ENCODE measurements at regions of chrX and their contacts with region 1.

Region 1: DNA sequence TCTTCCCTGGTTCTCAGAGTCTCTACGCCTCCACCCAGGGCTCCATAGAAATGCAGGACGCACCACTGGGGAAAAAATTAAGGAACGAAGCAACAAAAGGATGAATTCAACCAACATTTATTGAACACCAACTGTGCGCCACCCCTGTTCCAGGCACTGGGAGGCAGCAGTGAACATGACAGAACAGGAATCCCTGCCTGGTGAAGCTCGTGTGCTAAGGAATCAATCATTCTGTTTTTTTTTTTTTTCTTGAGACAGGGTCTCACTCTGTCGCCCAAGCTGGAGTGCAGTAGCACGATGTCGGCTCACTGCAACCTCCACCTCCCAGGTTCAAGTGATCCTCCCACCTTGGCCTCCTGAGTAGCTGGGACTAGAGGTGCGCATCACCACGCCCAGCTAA is 1.9 kb upstream of the FTSJ1 start:
- DNase-seq: peak in 1 of 2 experiments; percentile 22
- H3K4me3 ChIP-seq: no peak overlapping the region
- H3K4me3 Mint-ChIP-seq: no peak overlapping the region
- H3K27ac Mint-ChIP-seq: no peak overlapping the region
- H3K4me1 ChIP-seq: peaks cover 7% of the 10 kb centered on the region
- H3K4me1 Mint-ChIP-seq: peaks cover 34% of the 10 kb centered on the region
- H3K27me3 ChIP-seq: no peaks in the 10 kb centered on the region
- H3K27me3 Mint-ChIP-seq: no peaks in the 10 kb centered on the region
- CTCF ChIP-seq: peak in 1 of 2 experiments; percentile 26

Region 2: GRCh38 chrX:48511561-48511960 is 37.4 kb after region 1 on chrX:
- CTCF ChIA-PET with region 1: no interaction called
- POLR2A ChIA-PET with region 1: no interaction called
- intact Hi-C with region 1: loop called (anchors 1 kb)
- DNase-seq: peak; percentile 43 to 46
- H3K4me3 ChIP-seq: no peak overlapping the region
- H3K4me3 Mint-ChIP-seq: no peak overlapping the region
- H3K27ac Mint-ChIP-seq: peak overlapping the region; percentile 16
- H3K4me1 ChIP-seq: no peaks in the 10 kb centered on the region
- H3K4me1 Mint-ChIP-seq: no peaks in the 10 kb centered on the region
- H3K27me3 ChIP-seq: no peaks in the 10 kb centered on the region
- H3K27me3 Mint-ChIP-seq: no peaks in the 10 kb centered on the region
- CTCF ChIP-seq: peak; percentile 16 to 56

Region 3: GRCh38 chrX:48539345-48540027 is 65.4 kb after region 1 on chrX and contains the start of gene TBC1D25:
- CTCF ChIA-PET with region 1: interaction called, 10 read pairs
- POLR2A ChIA-PET with region 1: no interaction called
- intact Hi-C with region 1: no loop called
- DNase-seq: peak; percentile 96 to 98
- H3K4me3 ChIP-seq: peak within 1 kb of the TSS; percentile 68
- H3K4me3 Mint-ChIP-seq: peak within 1 kb of the TSS; percentile 87
- H3K27ac Mint-ChIP-seq: peak within 1 kb of the TSS; percentile 71
- H3K4me1 ChIP-seq: no peaks in the 10 kb centered on the region
- H3K4me1 Mint-ChIP-seq: peaks cover 8% of the 10 kb centered on the region
- H3K27me3 ChIP-seq: no peaks in the 10 kb centered on the region
- H3K27me3 Mint-ChIP-seq: no peaks in the 10 kb centered on the region
- CTCF ChIP-seq: peak in 1 of 2 experiments; percentile 27
- total RNA-seq, gene TBC1D25: 9.3 and 11.1 TPM in 2 replicates